ENCODE measurements at regions of chr22 and their contacts with region 1.

Region 1: GRCh38 chr22:43346521-43346929 is 3.4 kb upstream of the SCUBE1 start:
- DNase-seq: peak; percentile 73
- H3K4me3 ChIP-seq: no peak overlapping the region
- H3K27ac ChIP-seq: no peak overlapping the region
- H3K4me1 ChIP-seq: peaks cover 0 to 4% of the 10 kb centered on the region in 2 experiments; a peak in 1 of 4 replicates
- H3K27me3 ChIP-seq: no peaks in the 10 kb centered on the region
- CTCF ChIP-seq: peak; percentile 49
- EP300 ChIP-seq: no peak
- RAD21 ChIP-seq: peak; percentile 71

Region 2: DNA sequence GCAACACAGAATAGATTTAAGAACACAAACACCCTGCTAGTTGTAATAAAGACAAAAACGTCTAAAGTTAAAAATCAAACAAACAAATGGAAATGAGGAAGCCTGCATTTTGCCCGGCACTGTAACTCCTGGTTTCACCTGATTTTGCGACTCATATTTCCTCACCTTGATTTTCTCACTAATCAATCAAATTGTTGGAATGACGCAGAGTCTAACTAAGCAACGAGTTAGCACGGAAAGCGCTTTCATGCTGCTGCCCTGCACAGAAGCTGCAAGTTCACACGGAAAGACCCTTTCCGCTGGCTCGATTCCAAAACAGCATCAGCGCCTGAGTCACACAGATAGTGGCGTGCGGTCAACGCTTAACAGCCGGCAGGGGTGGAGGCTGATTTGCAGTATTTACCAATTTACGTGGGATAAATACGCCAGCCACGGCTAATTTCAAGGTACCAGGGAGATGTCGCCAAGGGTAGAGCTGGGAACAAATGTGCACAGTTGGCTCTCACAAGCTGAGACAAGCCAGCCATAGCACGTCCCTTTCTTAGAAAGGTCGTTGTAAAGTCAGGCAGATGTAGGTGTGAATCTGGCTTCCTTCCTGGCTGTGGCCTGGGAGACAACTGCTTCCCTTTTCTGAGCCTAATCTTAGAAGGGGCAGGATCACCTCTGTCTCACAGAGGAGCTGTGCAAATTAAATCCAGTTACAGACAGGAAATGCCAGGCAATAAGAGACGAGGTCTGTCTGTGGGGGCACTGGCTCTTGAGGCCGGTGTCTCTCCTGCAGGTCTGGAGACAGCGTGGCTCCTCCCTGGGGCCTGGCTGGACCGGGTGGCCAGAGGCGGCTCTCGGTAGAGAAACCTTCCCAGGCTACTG is 82.6 kb before region 1 on chr22:
- CTCF ChIA-PET with region 1: interaction called, 207 read pairs
- POLR2A ChIA-PET with region 1: no interaction called
- DNase-seq: peak; percentile 66
- H3K4me3 ChIP-seq: no peak overlapping the region
- H3K27ac ChIP-seq: peak overlapping the region in 1 of 2 experiments; percentile 85; a peak in 2 of 4 replicates
- H3K4me1 ChIP-seq: peaks cover 0 to 64% of the 10 kb centered on the region in 2 experiments; a peak in 2 of 4 replicates
- H3K27me3 ChIP-seq: no peaks in the 10 kb centered on the region
- CTCF ChIP-seq: no peak
- EP300 ChIP-seq: no peak
- RAD21 ChIP-seq: no peak

Region 3: DNA sequence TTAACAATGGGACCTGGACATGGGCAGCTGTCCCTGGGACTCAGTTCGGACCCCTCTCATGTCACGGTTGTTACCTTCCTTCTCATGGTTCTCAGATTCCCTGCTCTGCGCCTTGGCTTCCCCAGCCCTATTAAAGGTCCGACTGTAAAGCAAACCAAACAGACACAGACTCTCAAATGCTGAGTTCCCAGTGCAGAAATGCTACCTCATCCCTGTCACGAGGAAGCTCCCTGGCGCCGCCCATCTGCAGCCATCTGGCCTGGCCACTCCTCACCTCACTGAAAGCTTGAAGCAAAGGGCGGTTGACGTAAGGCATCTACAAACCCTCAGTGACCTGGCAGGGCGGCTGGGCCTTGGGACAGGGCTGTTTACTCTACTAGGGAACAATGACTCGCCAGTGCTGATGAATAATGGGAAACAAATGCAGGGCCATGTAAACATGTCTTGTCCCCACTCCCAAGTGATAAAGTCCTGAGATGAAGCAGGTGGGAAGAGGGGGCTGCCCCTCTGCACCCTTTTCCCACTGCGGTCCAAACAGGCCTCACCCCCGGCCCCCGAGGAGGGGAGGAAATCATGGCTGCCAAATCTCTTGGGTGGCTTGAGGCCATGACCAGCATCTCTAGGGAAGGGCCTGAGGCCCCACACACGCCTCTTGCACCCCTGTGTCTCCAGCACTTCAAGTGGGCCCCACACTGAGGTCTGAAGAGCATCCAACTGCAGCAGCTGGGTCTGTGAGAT is 52.7 kb before region 1 on chr22:
- CTCF ChIA-PET with region 1: interaction called, 25 read pairs
- POLR2A ChIA-PET with region 1: no interaction called
- DNase-seq: no peak
- H3K4me3 ChIP-seq: no peak overlapping the region
- H3K27ac ChIP-seq: peak overlapping the region in 1 of 2 experiments; percentile 95; a peak in 2 of 4 replicates
- H3K4me1 ChIP-seq: peaks cover 0 to 81% of the 10 kb centered on the region in 2 experiments; a peak in 1 of 4 replicates
- H3K27me3 ChIP-seq: no peaks in the 10 kb centered on the region
- CTCF ChIP-seq: no peak
- EP300 ChIP-seq: no peak
- RAD21 ChIP-seq: no peak

Region 4: GRCh38 chr22:43313244-43313889 is 33.2 kb before region 1 on chr22:
- CTCF ChIA-PET with region 1: interaction called, 11 read pairs
- POLR2A ChIA-PET with region 1: no interaction called
- DNase-seq: no peak
- H3K4me3 ChIP-seq: no peak overlapping the region
- H3K27ac ChIP-seq: no peak overlapping the region
- H3K4me1 ChIP-seq: peaks cover 0 to 52% of the 10 kb centered on the region in 2 experiments; a peak in 1 of 4 replicates
- H3K27me3 ChIP-seq: no peaks in the 10 kb centered on the region
- CTCF ChIP-seq: no peak
- EP300 ChIP-seq: no peak
- RAD21 ChIP-seq: no peak

Measured in SK-N-SH (cell line).